ENCODE measurements at regions of chr15 and their contacts with region 1.

Region 1: GRCh38 chr15:50890771-50891558 is 17.5 kb upstream of the AP4E1 start:
- DNase-seq: no peak
- ATAC-seq: no peak
- H3K4me3 Mint-ChIP-seq: no peak overlapping the region
- H3K27ac Mint-ChIP-seq: no peak overlapping the region
- H3K4me1 Mint-ChIP-seq: peaks cover 2% of the 10 kb centered on the region
- H3K27me3 Mint-ChIP-seq: no peaks in the 10 kb centered on the region
- CTCF ChIP-seq: no peak

Region 2: GRCh38 chr15:50876989-50877360 is 14.0 kb before region 1 on chr15:
- CTCF ChIA-PET with region 1: interaction called, 10 read pairs
- POLR2A ChIA-PET with region 1: interaction called, 4 read pairs
- intact Hi-C with region 1: loop called (anchors 1 kb)
- DNase-seq: peak; percentile 27
- ATAC-seq: peak; percentile 45
- H3K4me3 Mint-ChIP-seq: peak overlapping the region; percentile 82
- H3K27ac Mint-ChIP-seq: peak overlapping the region; percentile 27
- H3K4me1 Mint-ChIP-seq: peaks cover 39% of the 10 kb centered on the region
- H3K27me3 Mint-ChIP-seq: peaks cover 4% of the 10 kb centered on the region
- CTCF ChIP-seq: peak; percentile 98

Measured in activated B cell treated with CpG ODN at 0.5 μM for 24 hours (primary cell).